Naive thymus-derived CD4-positive, alpha-beta T cell (primary cell): ENCODE measurements at regions of chr10 and their contacts with region 1.

Region 1: DNA sequence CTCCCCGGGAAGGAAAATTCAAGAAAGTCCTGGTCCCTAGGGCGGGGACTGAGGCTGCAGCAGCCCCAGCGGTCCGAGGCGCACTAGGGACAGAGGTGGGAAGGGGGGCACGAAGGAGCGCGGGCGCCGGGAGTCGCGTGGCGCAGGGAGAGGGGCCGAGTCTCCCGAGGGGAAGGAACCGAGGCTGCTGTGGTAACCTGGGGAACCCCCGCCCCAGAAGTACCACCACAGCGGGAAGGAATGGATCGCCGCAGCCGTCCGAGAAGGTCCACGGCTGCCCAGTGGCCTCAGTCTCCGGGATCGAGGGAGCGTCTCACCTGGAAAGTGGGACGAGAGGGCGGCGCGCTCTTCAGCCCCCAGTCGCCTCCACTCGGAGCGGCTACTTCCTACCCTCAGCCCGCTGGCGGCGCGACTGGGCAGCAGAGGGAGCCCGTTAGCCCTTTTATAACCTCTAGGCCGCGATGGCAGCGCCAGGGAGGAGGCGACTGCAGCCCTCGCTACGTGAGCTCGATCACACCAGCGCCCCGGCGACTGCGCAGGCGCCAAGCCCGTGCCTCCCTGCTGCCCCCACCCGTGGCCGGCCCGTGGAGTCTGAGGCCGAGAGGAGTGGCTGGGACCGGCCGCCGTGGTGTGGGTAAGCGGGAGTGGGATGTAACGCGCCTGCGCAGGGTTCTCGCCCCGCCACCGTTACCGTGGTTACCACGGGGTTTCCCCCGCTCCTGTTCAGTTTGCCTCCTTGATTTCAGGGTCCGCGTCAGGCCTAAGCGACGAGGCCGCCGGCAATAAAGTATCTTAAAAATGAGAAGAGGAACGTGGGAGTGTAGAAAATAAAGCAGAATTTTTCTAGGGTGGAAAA is at the start of gene P4HA1:
- DNase-seq: peak; percentile 88 to 99 (median 92)
- ATAC-seq: peak; percentile 95
- H3K4me3 ChIP-seq: peak within 1 kb of the TSS; percentile 60
- H3K4me3 Mint-ChIP-seq: peak within 1 kb of the TSS; percentile 91 to 97 (median 96)
- H3K27ac ChIP-seq: peak within 1 kb of the TSS; percentile 97
- H3K27ac Mint-ChIP-seq: peak within 1 kb of the TSS; percentile 76 to 98 (median 92)
- H3K4me1 ChIP-seq: peaks cover 0 to 12% of the 10 kb centered on the region in 2 donors
- H3K4me1 Mint-ChIP-seq: peaks cover 13 to 44% (median 38%) of the 10 kb centered on the region in 7 donors
- H3K27me3 ChIP-seq: no peaks in the 10 kb centered on the region
- H3K27me3 Mint-ChIP-seq: peaks cover 0 to 3% (median 0%) of the 10 kb centered on the region in 5 donors
- total RNA-seq, gene P4HA1: 10.5 to 74.7 (median 14.7) TPM

Region 2: GRCh38 chr10:72364239-72364777 is 732.4 kb before region 1 on chr10:
- CTCF ChIA-PET with region 1: interaction called, 3 read pairs
- POLR2A ChIA-PET with region 1: no interaction called
- intact Hi-C with region 1: loop called in 1 of 2 experiments (anchors 2 kb)
- DNase-seq: peak; percentile 66 to 90 (median 85)
- ATAC-seq: peak; percentile 100
- H3K4me3 ChIP-seq: peak overlapping the region; percentile 31
- H3K4me3 Mint-ChIP-seq: peak overlapping the region in 9 of 10 donors; percentile 4 to 74 (median 45)
- H3K27ac ChIP-seq: peak overlapping the region; percentile 61
- H3K27ac Mint-ChIP-seq: peak overlapping the region; percentile 15 to 94 (median 81)
- H3K4me1 ChIP-seq: peaks cover 12% of the 10 kb centered on the region in 2 donors
- H3K4me1 Mint-ChIP-seq: peaks cover 7 to 25% (median 13%) of the 10 kb centered on the region in 7 donors
- H3K27me3 ChIP-seq: no peaks in the 10 kb centered on the region
- H3K27me3 Mint-ChIP-seq: peaks cover 0 to 5% (median 0%) of the 10 kb centered on the region in 5 donors

Region 3: DNA sequence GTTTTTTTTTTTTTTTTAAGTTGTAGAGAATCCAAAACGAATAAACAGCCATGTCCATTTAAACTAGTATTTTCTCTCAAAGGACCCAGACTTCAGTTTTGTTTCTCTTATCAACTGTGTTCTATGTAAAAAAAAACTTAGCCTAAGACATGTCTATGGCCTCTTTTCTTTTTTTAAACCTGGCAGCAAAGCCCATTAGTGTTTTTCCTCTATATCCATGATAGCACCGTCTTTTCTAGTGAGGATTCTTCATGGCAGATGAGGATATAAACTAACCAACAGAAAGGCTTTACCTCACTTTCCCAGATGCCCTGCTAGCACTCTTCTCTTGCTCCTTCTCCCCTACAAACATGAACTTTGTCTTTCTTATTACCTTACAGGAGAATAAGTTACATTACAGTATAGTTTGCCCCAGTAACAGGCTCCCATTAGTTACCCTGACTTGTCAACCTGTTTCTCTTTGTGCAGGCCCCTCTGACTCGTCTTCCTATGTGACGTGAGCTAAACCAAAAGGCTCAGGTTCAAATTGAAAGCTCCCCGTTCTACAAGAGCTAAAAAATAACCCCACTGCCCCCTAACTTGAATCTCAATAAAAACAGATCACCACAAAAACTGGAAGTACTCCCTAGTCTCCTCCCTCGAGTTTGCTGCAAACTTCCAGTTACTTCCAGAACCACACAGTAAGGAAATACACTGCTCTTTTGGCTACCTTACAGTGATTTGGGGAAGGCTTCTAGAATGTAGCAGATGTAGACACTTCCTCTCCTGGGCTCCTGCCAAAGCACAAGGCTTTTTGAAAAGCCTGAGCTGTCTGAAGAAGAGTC is 20.1 kb before region 1 on chr10:
- CTCF ChIA-PET with region 1: interaction called, 3 read pairs
- POLR2A ChIA-PET with region 1: no interaction called
- intact Hi-C with region 1: loop called in 1 of 2 experiments (anchors 2 kb)
- DNase-seq: no peak
- ATAC-seq: no peak
- H3K4me3 ChIP-seq: no peak overlapping the region
- H3K4me3 Mint-ChIP-seq: peak overlapping the region in 1 of 10 donors; percentile 55
- H3K27ac ChIP-seq: no peak overlapping the region
- H3K27ac Mint-ChIP-seq: peak overlapping the region in 5 of 9 donors; percentile 11 to 91 (median 55)
- H3K4me1 ChIP-seq: no peaks in the 10 kb centered on the region
- H3K4me1 Mint-ChIP-seq: peaks cover 5 to 33% (median 8%) of the 10 kb centered on the region in 7 donors
- H3K27me3 ChIP-seq: no peaks in the 10 kb centered on the region
- H3K27me3 Mint-ChIP-seq: no peaks in the 10 kb centered on the region

Region 4: DNA sequence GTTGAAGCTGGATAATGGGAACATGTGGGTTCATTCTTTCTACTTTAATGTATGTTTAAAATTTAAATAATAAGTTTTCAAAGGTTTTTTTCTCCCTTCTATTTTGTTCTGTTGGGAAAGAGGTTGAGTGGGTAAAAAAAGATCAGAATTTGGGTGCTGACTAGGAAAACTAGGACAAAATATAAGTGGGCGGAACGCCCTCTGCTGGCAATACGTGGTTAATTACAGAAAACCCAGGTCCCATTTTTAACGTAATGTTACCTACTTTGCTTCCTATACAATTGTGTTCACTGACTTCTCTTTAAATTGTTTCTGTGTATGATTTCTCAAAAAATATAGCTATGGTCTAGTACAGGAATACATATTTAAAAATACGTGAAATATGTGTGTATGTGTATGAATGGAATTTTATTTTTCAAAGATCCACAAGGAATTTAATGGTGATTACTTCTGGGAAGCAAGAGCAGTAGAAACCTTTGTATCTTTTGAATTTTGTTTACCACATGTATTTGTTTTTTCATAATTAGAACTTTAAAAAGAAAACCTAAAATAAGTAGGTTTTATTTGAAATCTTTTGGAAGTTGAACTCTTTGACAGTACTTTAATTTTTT is 62.5 kb after region 1 on chr10:
- CTCF ChIA-PET with region 1: interaction called, 46 read pairs
- POLR2A ChIA-PET with region 1: interaction called, 6 read pairs
- intact Hi-C with region 1: loop called (anchors 1 kb)
- DNase-seq: peak in 8 of 9 donors; percentile 33 to 67 (median 58)
- ATAC-seq: peak; percentile 86
- H3K4me3 ChIP-seq: no peak overlapping the region
- H3K4me3 Mint-ChIP-seq: peak overlapping the region in 1 of 10 donors; percentile 16
- H3K27ac ChIP-seq: no peak overlapping the region
- H3K27ac Mint-ChIP-seq: peak overlapping the region in 3 of 9 donors; percentile 22 to 74 (median 42)
- H3K4me1 ChIP-seq: peaks cover 9 to 10% of the 10 kb centered on the region in 2 donors
- H3K4me1 Mint-ChIP-seq: peaks cover 27 to 44% (median 39%) of the 10 kb centered on the region in 7 donors
- H3K27me3 ChIP-seq: no peaks in the 10 kb centered on the region
- H3K27me3 Mint-ChIP-seq: no peaks in the 10 kb centered on the region

Region 5: DNA sequence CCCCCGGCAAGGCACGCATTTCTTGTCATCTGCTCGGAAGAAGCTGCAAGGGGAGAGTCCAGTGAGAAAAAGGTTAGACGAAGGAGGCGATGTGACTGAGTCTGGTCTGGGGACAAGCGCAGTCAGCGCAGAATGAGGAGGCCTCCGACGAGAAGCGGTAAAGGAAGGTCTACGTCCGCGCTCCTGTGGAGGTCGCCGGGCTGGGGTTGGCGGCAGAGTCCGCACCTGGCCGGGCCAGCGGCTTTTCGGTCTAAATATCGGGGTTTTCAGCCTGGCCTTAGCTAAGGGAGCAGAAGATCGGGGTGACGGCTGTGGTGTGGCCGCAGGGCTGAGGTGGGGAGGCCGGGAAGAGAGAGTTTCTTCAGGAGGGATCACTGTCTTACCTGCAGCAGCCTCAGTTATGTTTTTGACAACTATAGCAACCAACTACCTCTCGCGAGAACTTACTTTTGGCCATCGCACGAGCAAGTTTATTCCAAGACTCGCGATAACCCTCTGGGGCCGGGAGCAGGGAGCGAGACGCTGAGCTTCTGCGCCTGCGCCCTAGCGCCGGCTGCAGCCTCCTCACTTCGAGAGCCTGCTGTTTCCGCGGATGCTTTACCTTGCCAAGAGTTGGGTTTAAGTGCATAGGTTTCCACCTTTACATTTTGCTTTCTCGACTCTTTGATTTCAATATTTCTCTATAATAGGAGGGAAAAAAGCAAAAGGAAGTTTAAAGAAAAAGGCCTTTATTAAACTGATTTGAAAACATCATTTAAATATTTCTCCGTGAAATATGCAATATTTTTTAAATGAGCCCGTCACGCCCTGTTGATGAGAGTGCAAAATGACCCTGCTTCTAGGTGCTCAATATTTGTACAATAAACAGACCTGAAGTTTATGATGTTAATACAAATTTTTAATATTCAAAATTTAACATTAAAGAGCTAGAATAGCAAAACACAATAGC is 261.9 kb after region 1 on chr10 and contains the start of gene CFAP70:
- CTCF ChIA-PET with region 1: no interaction called
- POLR2A ChIA-PET with region 1: no interaction called
- intact Hi-C with region 1: loop called in 1 of 2 experiments (anchors 2 kb)
- DNase-seq: peak; percentile 79 to 97 (median 95)
- ATAC-seq: peak; percentile 97
- H3K4me3 ChIP-seq: peak within 1 kb of the TSS; percentile 70
- H3K4me3 Mint-ChIP-seq: peak within 1 kb of the TSS; percentile 91 to 99 (median 94)
- H3K27ac ChIP-seq: peak within 1 kb of the TSS; percentile 85
- H3K27ac Mint-ChIP-seq: peak within 1 kb of the TSS; percentile 92 to 99 (median 97)
- H3K4me1 ChIP-seq: peaks cover 4 to 5% of the 10 kb centered on the region in 2 donors
- H3K4me1 Mint-ChIP-seq: peaks cover 11 to 20% (median 18%) of the 10 kb centered on the region in 7 donors
- H3K27me3 ChIP-seq: no peaks in the 10 kb centered on the region
- H3K27me3 Mint-ChIP-seq: peaks cover 0 to 23% (median 0%) of the 10 kb centered on the region in 5 donors
- total RNA-seq, gene CFAP70: 0.80 to 5.4 (median 4.6) TPM